ENCODE measurements at regions of chr9 and their contacts with region 1.

Region 1: DNA sequence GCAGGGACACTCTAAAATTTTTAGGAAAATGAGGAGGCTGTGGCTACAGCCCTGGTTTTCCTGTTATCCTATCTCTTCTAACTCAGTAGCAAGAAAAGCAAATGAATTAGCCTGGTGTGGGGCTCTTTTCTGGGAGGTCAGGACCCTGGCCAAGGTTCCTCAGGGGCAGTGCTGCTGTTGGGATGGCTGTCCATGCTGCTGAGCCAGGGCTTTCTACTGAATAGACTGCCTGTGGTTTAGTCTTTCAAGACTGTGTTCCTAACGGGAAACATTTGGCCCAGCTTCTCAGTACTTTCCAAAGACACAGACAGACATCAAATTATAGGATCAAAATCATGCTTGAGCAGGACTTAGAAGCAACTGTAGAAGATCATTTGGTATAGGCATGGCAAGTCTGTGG is 18.1 kb downstream of the TNC start:
- DNase-seq: no peak
- ATAC-seq: no peak
- H3K4me3 ChIP-seq: no peak overlapping the region
- H3K4me3 Mint-ChIP-seq: no peak overlapping the region
- H3K27ac ChIP-seq: no peak overlapping the region
- H3K27ac Mint-ChIP-seq: no peak overlapping the region
- H3K4me1 ChIP-seq: no peaks in the 10 kb centered on the region
- H3K4me1 Mint-ChIP-seq: no peaks in the 10 kb centered on the region
- H3K27me3 ChIP-seq: no peaks in the 10 kb centered on the region
- H3K27me3 Mint-ChIP-seq: peaks cover 10 to 29% of the 10 kb centered on the region in 2 donors
- CTCF ChIP-seq: no peak

Region 2: DNA sequence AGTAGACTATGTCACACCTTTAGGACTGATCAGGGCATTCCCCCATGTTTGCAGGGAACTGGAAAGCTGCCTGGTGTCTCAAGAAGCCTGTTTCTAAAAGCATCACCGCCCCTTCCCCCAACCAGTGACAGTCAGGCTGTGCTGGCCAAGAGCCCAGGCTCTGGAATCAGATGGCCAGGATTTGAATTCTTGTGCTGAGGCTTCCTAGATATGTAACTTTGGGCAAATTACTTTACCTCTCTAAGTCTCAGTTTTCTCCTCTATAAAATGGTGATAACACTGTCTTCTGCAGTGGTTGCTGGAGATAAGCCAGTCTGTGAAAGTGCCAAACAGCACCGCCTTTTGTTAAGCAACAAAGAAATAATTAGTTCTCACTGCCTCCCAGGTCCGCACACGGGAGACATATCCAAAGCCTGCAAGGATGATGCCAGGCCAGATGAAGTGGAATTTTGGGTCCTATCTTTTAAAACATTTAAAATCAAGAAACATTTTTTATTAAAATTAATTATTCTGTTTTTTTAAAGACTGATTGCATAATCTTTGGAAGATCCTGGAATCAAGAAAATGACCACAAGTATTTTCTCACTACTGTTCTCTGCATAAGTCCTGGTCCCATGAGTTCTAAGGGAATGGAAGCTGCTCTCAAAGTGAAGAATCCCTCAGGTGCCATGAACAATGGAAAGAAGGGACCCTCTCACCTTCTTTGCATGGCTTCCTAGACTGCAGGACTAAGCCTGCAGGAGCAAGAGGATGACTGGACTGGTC is 1935.2 kb before region 1 on chr9:
- intact Hi-C with region 1: loop called (anchors 10 kb)
- DNase-seq: no peak
- ATAC-seq: no peak
- H3K4me3 ChIP-seq: no peak overlapping the region
- H3K4me3 Mint-ChIP-seq: no peak overlapping the region
- H3K27ac ChIP-seq: no peak overlapping the region
- H3K27ac Mint-ChIP-seq: no peak overlapping the region
- H3K4me1 ChIP-seq: no peaks in the 10 kb centered on the region
- H3K4me1 Mint-ChIP-seq: peaks cover 0 to 4% of the 10 kb centered on the region in 2 donors
- H3K27me3 ChIP-seq: no peaks in the 10 kb centered on the region
- H3K27me3 Mint-ChIP-seq: no peaks in the 10 kb centered on the region
- CTCF ChIP-seq: no peak

Region 3: GRCh38 chr9:114861922-114862605 is 237.8 kb before region 1 on chr9:
- intact Hi-C with region 1: no loop called
- DNase-seq: no peak
- ATAC-seq: no peak
- H3K4me3 ChIP-seq: no peak overlapping the region
- H3K4me3 Mint-ChIP-seq: no peak overlapping the region
- H3K27ac ChIP-seq: no peak overlapping the region
- H3K27ac Mint-ChIP-seq: no peak overlapping the region
- H3K4me1 ChIP-seq: no peaks in the 10 kb centered on the region
- H3K4me1 Mint-ChIP-seq: no peaks in the 10 kb centered on the region
- H3K27me3 ChIP-seq: no peaks in the 10 kb centered on the region
- H3K27me3 Mint-ChIP-seq: peaks cover 0 to 7% of the 10 kb centered on the region in 2 donors
- CTCF ChIP-seq: no peak

Region 4: GRCh38 chr9:114930056-114930812 is 169.7 kb before region 1 on chr9 and contains the start of gene TNFSF8:
- intact Hi-C with region 1: no loop called
- DNase-seq: peak; percentile 53 to 90
- ATAC-seq: peak; percentile 75 to 87 (median 85)
- H3K4me3 ChIP-seq: peak within 1 kb of the TSS; percentile 41
- H3K4me3 Mint-ChIP-seq: peak within 1 kb of the TSS; percentile 92
- H3K27ac ChIP-seq: peak within 1 kb of the TSS; percentile 75
- H3K27ac Mint-ChIP-seq: peak within 1 kb of the TSS; percentile 88 to 94
- H3K4me1 ChIP-seq: peaks cover 19% of the 10 kb centered on the region
- H3K4me1 Mint-ChIP-seq: peaks cover 48 to 53% of the 10 kb centered on the region in 2 donors
- H3K27me3 ChIP-seq: no peaks in the 10 kb centered on the region
- H3K27me3 Mint-ChIP-seq: peaks cover 3 to 9% of the 10 kb centered on the region in 2 donors
- CTCF ChIP-seq: no peak
- total RNA-seq, gene TNFSF8: 4.2 to 6.0 (median 4.8) TPM

Region 5: GRCh38 chr9:115135821-115136778 is 36.2 kb after region 1 on chr9:
- intact Hi-C with region 1: no loop called
- DNase-seq: no peak
- ATAC-seq: no peak
- H3K4me3 ChIP-seq: no peak overlapping the region
- H3K4me3 Mint-ChIP-seq: no peak overlapping the region
- H3K27ac ChIP-seq: no peak overlapping the region
- H3K27ac Mint-ChIP-seq: no peak overlapping the region
- H3K4me1 ChIP-seq: no peaks in the 10 kb centered on the region
- H3K4me1 Mint-ChIP-seq: no peaks in the 10 kb centered on the region
- H3K27me3 ChIP-seq: no peaks in the 10 kb centered on the region
- H3K27me3 Mint-ChIP-seq: peaks cover 8 to 15% of the 10 kb centered on the region in 2 donors
- CTCF ChIP-seq: no peak